H1 (cell line): ENCODE measurements at regions of chr16 and their contacts with region 1.

Region 1: GRCh38 chr16:49382916-49383315 is 9.3 kb downstream of the C16orf78 start:
- DNase-seq: peak in 1 of 2 experiments; percentile 70
- H3K4me3 ChIP-seq: no peak overlapping the region
- H3K27ac ChIP-seq: no peak overlapping the region
- H3K4me1 ChIP-seq: no peaks in the 10 kb centered on the region
- H3K27me3 ChIP-seq: no peaks in the 10 kb centered on the region
- CTCF ChIP-seq: peak; percentile 53 to 75 (median 58)
- EP300 ChIP-seq: no peak
- POLR2A ChIP-seq: no peak
- RAD21 ChIP-seq: peak; percentile 39 to 58

Region 2: DNA sequence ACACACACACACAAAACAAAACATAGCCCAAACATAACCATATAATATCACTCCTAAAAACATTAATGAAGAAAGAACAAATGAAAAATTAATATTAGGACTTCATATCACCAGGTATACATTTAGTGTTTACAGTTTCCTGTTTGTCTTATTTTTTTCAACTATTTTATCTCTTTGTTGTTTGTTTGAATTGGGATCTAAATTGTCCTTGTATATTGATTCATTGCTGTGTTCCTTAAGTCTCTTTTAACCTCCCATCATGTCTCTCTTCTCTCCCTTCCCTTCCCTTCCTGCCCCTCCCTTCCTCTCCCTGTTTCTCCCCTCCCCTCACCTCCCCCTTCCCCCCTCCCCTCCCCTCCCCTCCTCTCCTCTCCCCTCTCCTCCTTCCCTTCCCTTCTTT is 77.5 kb before region 1 on chr16:
- CTCF ChIA-PET with region 1: no interaction called
- POLR2A ChIA-PET with region 1: no interaction called
- DNase-seq: no peak
- H3K4me3 ChIP-seq: no peak overlapping the region
- H3K27ac ChIP-seq: no peak overlapping the region
- H3K4me1 ChIP-seq: peaks cover 0 to 4% (median 0%) of the 10 kb centered on the region in 4 experiments; a peak in 1 of 7 replicates
- H3K27me3 ChIP-seq: no peaks in the 10 kb centered on the region
- CTCF ChIP-seq: no peak
- EP300 ChIP-seq: no peak
- POLR2A ChIP-seq: no peak
- RAD21 ChIP-seq: no peak

Region 3: GRCh38 chr16:49356728-49357488 is 26.0 kb before region 1 on chr16:
- CTCF ChIA-PET with region 1: interaction called, 10 read pairs
- POLR2A ChIA-PET with region 1: no interaction called
- DNase-seq: no peak
- H3K4me3 ChIP-seq: no peak overlapping the region
- H3K27ac ChIP-seq: no peak overlapping the region
- H3K4me1 ChIP-seq: peaks cover 0 to 4% (median 0%) of the 10 kb centered on the region in 4 experiments; a peak in 3 of 7 replicates
- H3K27me3 ChIP-seq: no peaks in the 10 kb centered on the region
- CTCF ChIP-seq: no peak
- EP300 ChIP-seq: no peak
- POLR2A ChIP-seq: no peak
- RAD21 ChIP-seq: no peak

Region 4: GRCh38 chr16:49365711-49366509 is 17.0 kb before region 1 on chr16:
- CTCF ChIA-PET with region 1: interaction called, 12 read pairs
- POLR2A ChIA-PET with region 1: no interaction called
- DNase-seq: no peak
- H3K4me3 ChIP-seq: no peak overlapping the region
- H3K27ac ChIP-seq: no peak overlapping the region
- H3K4me1 ChIP-seq: peaks cover 0 to 19% (median 8%) of the 10 kb centered on the region in 4 experiments; a peak in 4 of 7 replicates
- H3K27me3 ChIP-seq: no peaks in the 10 kb centered on the region; a peak in 1 of 7 replicates
- CTCF ChIP-seq: no peak
- EP300 ChIP-seq: no peak
- POLR2A ChIP-seq: no peak
- RAD21 ChIP-seq: no peak

Region 5: GRCh38 chr16:49414671-49415070 is 31.8 kb after region 1 on chr16:
- CTCF ChIA-PET with region 1: no interaction called
- POLR2A ChIA-PET with region 1: no interaction called
- DNase-seq: no peak
- H3K4me3 ChIP-seq: no peak overlapping the region
- H3K27ac ChIP-seq: no peak overlapping the region
- H3K4me1 ChIP-seq: no peaks in the 10 kb centered on the region
- H3K27me3 ChIP-seq: no peaks in the 10 kb centered on the region; a peak in 1 of 7 replicates
- CTCF ChIP-seq: no peak
- EP300 ChIP-seq: no peak
- POLR2A ChIP-seq: no peak
- RAD21 ChIP-seq: no peak